H1 (cell line): ENCODE measurements at regions of chr2 and their contacts with region 1.

Region 1: DNA sequence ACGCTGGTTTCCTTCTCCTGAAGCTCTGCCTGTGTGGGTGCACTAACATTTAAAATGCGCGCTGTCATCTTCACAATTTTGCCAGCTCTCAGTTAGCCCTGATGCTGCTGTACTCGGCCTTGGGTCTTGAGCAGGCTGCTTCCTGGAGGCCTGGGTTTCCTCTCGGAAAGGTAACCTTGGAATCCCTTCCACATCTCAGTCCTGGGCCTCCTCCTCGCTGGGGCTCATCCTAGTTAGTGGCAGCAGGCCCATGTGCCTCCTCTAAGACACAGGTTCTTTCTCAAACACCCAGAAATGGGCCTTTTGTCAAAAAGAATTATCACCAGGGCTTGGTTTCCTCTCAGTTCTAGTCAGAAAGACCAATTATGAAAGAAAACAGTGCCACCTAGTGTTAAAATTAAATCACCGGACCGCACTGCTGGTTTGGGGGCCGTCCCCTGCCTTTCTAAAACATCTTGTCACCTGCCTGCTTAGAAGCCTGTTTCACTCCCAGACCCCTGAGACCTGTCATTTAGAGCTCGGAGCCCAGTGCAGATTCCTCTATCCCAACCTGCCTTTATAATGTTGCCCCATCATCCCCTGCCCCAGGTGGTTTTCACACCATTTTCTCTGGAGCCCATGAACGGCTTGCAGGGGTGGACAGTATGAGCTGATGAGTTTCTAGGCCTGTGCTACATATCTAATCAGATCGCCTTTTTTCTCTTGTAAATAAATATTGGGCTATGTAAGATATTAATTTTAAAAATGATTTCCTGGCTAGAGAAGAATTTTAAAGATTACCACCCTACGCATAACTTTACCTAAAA is 42.4 kb downstream of the HK2 start:
- DNase-seq: peak in 1 of 2 experiments; percentile 57
- H3K4me3 ChIP-seq: no peak overlapping the region
- H3K27ac ChIP-seq: no peak overlapping the region
- H3K4me1 ChIP-seq: peaks cover 0 to 3% (median 0%) of the 10 kb centered on the region in 4 experiments; a peak in 3 of 7 replicates
- H3K27me3 ChIP-seq: no peaks in the 10 kb centered on the region
- CTCF ChIP-seq: peak; percentile 37 to 68 (median 60)
- EP300 ChIP-seq: no peak
- POLR2A ChIP-seq: no peak
- RAD21 ChIP-seq: peak; percentile 76 to 83

Region 2: DNA sequence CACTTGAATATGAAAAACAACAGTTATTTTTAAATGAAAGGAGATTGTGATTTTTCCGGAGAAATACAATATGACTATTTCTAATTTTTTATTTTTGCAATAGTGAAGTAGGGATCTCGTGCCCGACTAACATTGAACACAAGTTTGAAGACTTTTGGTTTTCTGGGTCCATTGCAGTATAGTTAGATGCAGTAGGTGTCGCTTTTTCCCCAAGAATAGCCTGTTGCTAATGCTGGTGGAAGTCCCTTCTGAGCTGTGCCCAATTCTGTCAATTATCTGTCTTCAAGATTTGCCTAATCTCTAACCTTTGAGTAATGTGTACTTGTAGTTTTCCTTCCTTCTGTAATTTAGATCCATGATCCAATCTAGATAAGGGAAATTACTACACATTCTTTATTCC is 185.7 kb before region 1 on chr2:
- CTCF ChIA-PET with region 1: interaction called, 48 read pairs
- POLR2A ChIA-PET with region 1: no interaction called
- DNase-seq: no peak
- H3K4me3 ChIP-seq: no peak overlapping the region
- H3K27ac ChIP-seq: no peak overlapping the region
- H3K4me1 ChIP-seq: no peaks in the 10 kb centered on the region
- H3K27me3 ChIP-seq: no peaks in the 10 kb centered on the region
- CTCF ChIP-seq: peak in 2 of 3 experiments; percentile 76 to 82; a peak in 3 of 4 replicates
- EP300 ChIP-seq: no peak
- POLR2A ChIP-seq: no peak
- RAD21 ChIP-seq: peak; percentile 97 to 98

Region 3: GRCh38 chr2:74703373-74703772 is 172.9 kb before region 1 on chr2:
- CTCF ChIA-PET with region 1: interaction called, 25 read pairs
- POLR2A ChIA-PET with region 1: no interaction called
- DNase-seq: no peak
- H3K4me3 ChIP-seq: no peak overlapping the region
- H3K27ac ChIP-seq: no peak overlapping the region
- H3K4me1 ChIP-seq: no peaks in the 10 kb centered on the region; a peak in 2 of 7 replicates
- H3K27me3 ChIP-seq: no peaks in the 10 kb centered on the region
- CTCF ChIP-seq: no peak
- EP300 ChIP-seq: no peak
- POLR2A ChIP-seq: no peak
- RAD21 ChIP-seq: no peak

Region 4: GRCh38 chr2:74751981-74752851 is 124.1 kb before region 1 on chr2:
- CTCF ChIA-PET with region 1: interaction called, 10 read pairs
- POLR2A ChIA-PET with region 1: no interaction called
- DNase-seq: no peak
- H3K4me3 ChIP-seq: no peak overlapping the region
- H3K27ac ChIP-seq: no peak overlapping the region
- H3K4me1 ChIP-seq: no peaks in the 10 kb centered on the region
- H3K27me3 ChIP-seq: no peaks in the 10 kb centered on the region; a peak in 2 of 7 replicates
- CTCF ChIP-seq: no peak
- EP300 ChIP-seq: no peak
- POLR2A ChIP-seq: no peak
- RAD21 ChIP-seq: no peak

Region 5: DNA sequence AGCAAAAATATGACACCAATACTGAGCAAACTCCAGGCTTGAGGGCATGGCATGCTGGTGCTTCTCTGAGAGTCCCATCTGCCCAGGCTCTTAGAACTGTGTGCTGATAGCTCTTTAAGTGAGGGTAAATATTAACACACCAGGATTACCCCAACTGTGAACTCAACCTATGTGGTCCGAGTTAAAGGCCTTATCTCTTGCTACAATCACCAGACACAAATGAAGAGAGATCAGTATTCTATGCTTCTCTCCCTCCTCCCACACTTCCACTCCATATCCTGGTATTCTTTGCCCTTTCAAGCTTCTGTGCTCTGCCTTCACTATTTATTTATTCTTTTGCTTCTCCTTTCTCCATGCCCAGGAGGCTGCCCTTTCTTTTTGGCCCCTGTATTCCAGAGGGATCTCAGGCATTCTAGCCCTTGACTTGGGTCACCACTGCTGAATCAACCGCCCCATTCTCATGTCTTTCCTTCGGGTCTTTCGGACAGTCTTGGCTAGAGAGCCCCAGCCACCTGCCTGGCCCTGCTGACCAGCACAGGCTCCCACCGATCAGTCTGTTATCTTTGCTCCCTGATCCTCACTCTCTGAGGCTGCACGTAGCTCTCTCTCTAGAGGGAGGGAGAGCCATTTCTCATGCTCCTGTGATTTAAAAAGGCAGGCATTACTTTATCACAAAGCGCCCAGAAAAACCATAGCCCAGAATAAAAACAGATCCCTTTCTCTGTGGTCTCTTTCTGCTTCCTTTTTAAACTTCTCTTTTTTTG is 59.6 kb before region 1 on chr2:
- CTCF ChIA-PET with region 1: no interaction called
- POLR2A ChIA-PET with region 1: no interaction called
- DNase-seq: peak in 1 of 2 experiments; percentile 26
- H3K4me3 ChIP-seq: no peak overlapping the region
- H3K27ac ChIP-seq: no peak overlapping the region
- H3K4me1 ChIP-seq: no peaks in the 10 kb centered on the region
- H3K27me3 ChIP-seq: no peaks in the 10 kb centered on the region
- CTCF ChIP-seq: no peak
- EP300 ChIP-seq: no peak
- POLR2A ChIP-seq: no peak
- RAD21 ChIP-seq: no peak

Region 6: GRCh38 chr2:74833418-74834233 is 42.7 kb before region 1 on chr2 and contains the start of gene HK2:
- CTCF ChIA-PET with region 1: interaction called, 99 read pairs
- POLR2A ChIA-PET with region 1: interaction called, 12 read pairs
- DNase-seq: peak; percentile 65 to 79
- H3K4me3 ChIP-seq: peak within 1 kb of the TSS; percentile 87 to 91 (median 88)
- H3K27ac ChIP-seq: peak within 1 kb of the TSS; percentile 96
- H3K4me1 ChIP-seq: peaks cover 7 to 21% (median 13%) of the 10 kb centered on the region in 4 experiments
- H3K27me3 ChIP-seq: no peaks in the 10 kb centered on the region
- CTCF ChIP-seq: no peak
- EP300 ChIP-seq: no peak
- POLR2A ChIP-seq: 0 out of 3 replicates have a peak, but pooled peaks of 1 of the 2 experiments have one; percentile 42
- RAD21 ChIP-seq: no peak
- total RNA-seq, gene HK2: 61.0 and 61.9 TPM in 2 replicates

Region 7: DNA sequence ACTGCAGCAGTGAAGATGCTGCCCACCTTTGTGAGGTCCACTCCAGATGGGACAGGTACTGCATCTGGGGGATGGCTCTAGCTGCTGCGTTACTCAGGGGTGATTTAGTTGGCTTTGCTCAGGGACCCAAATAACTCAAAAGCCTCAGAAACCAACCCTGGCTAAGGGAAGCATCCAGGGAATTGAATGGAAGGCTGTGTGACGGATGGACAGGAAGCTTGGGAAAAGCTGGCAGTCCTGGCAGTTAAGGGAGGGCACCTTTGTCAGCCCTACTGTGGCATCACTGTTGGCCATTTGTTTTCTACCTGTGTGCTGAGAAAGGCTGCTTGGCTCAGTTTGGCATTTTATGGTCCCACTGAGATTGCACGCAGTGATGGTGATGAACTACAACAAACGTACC is 21.9 kb before region 1 on chr2:
- CTCF ChIA-PET with region 1: interaction called, 19 read pairs
- POLR2A ChIA-PET with region 1: no interaction called
- DNase-seq: no peak
- H3K4me3 ChIP-seq: no peak overlapping the region
- H3K27ac ChIP-seq: no peak overlapping the region
- H3K4me1 ChIP-seq: peaks cover 0 to 16% (median 12%) of the 10 kb centered on the region in 4 experiments; a peak in 5 of 7 replicates
- H3K27me3 ChIP-seq: no peaks in the 10 kb centered on the region
- CTCF ChIP-seq: no peak
- EP300 ChIP-seq: no peak
- POLR2A ChIP-seq: no peak
- RAD21 ChIP-seq: no peak

Region 8: DNA sequence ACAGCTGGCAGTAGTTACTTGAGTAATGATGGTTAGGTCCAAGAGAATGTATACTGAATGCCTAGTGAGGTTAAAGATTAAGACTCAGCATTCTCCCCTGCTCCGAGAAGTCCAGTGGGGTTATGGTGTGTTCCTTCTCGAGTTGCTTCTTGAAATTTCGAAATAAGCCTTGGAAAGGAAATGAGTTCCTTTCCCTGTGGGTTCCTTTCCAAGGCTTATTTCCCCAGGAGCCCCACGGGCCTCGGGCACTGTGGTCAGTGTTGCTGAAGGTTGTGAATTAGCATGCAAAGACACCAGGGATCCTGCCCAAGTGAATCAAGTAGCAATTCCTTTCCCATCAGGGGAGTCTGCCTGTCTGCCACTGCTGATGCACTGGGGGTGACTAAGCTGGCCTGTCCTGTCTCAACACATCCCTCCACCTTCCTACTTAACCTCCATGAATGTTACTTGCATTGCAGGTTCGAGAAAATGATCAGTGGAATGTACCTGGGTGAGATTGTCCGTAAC is 11.2 kb after region 1 on chr2:
- CTCF ChIA-PET with region 1: interaction called, 10 read pairs
- POLR2A ChIA-PET with region 1: no interaction called
- DNase-seq: no peak
- H3K4me3 ChIP-seq: no peak overlapping the region
- H3K27ac ChIP-seq: no peak overlapping the region
- H3K4me1 ChIP-seq: no peaks in the 10 kb centered on the region
- H3K27me3 ChIP-seq: no peaks in the 10 kb centered on the region
- CTCF ChIP-seq: no peak
- EP300 ChIP-seq: no peak
- POLR2A ChIP-seq: no peak
- RAD21 ChIP-seq: no peak

Region 9: DNA sequence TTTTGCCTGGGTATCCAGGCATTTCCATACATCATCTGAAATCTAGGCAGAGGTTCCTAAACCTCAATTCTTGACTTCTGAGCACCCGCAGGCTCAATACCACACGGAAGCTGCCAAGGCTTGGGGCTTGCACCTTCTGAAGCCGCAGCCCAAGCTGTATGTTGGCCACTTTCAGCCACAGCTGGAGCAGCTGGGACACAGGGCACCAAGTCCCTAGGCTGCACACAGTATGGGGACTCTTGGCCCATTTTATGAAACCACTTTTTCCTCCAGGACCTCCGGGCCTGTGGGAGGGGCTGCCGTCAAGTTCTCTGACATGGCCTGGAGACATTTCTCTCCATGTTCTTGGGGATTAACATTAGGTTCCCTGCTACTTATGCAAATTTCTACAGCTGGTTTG is 30.1 kb after region 1 on chr2:
- CTCF ChIA-PET with region 1: no interaction called
- POLR2A ChIA-PET with region 1: no interaction called
- DNase-seq: no peak
- H3K4me3 ChIP-seq: no peak overlapping the region
- H3K27ac ChIP-seq: no peak overlapping the region
- H3K4me1 ChIP-seq: peaks cover 0 to 3% (median 1%) of the 10 kb centered on the region in 4 experiments; a peak in 2 of 7 replicates
- H3K27me3 ChIP-seq: peaks cover 1 to 7% (median 5%) of the 10 kb centered on the region in 4 experiments; a peak in 4 of 7 replicates
- CTCF ChIP-seq: no peak
- EP300 ChIP-seq: no peak
- POLR2A ChIP-seq: no peak
- RAD21 ChIP-seq: no peak

Region 10: DNA sequence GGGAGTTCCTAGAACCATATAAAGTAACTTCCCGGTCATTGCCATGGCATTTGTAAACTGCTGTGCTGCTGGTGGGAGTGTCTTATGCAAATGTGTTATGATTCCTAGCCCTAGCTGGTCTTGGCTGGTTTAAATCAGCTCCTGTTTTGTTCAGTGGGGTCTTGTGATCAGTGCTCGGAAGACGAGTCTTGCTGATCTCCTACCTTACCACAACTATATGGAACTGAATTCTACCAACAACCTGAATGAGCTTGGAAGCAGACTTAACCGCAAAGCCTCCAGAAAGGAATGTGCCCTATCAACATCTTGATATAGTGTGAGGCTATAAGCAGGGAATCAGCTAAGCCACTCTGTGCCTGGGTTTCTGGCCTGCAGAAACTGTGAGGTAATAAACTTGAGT is 115.7 kb after region 1 on chr2:
- CTCF ChIA-PET with region 1: no interaction called
- POLR2A ChIA-PET with region 1: no interaction called
- DNase-seq: no peak
- H3K4me3 ChIP-seq: no peak overlapping the region
- H3K27ac ChIP-seq: no peak overlapping the region
- H3K4me1 ChIP-seq: peaks cover 1 to 6% (median 3%) of the 10 kb centered on the region in 4 experiments; a peak in 3 of 7 replicates
- H3K27me3 ChIP-seq: no peaks in the 10 kb centered on the region
- CTCF ChIP-seq: no peak
- EP300 ChIP-seq: no peak
- POLR2A ChIP-seq: peak in 1 of 2 experiments; percentile 52; a peak in 1 of 3 replicates
- RAD21 ChIP-seq: no peak